GM12878 (cell line): ENCODE measurements at regions of chr3 and their contacts with region 1.

Region 1: DNA sequence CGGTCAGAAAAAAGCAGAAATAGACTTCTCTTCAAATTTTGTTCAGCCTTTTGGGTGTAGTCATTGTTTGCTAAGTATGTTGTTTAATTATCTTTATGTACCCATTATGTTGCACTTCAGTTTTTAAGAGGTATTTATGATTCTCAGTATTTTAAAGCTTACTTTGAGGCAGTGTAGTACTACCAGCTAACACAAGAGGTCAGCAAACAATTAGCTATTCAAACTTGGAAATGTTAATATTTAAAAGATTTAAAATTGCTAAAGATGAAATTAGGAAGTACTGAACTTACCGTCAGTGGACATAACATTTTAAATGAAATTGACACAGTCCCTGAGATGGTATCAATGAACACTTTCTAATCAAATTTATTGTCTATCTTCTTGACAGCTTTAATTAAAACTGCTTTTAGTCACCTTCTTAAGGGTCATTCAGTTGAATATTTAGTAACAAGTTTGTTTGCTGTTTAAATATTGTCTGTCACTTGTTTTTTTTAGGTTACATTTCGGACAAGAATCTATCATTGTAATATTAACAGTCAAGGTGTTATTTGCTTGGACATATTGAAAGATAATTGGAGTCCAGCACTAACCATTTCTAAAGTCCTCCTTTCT is 28.1 kb downstream of the NKIRAS1 start:
- DNase-seq: no peak
- ATAC-seq: peak; percentile 56
- H3K4me3 ChIP-seq: no peak overlapping the region
- H3K27ac ChIP-seq: no peak overlapping the region
- H3K4me1 ChIP-seq: no peaks in the 10 kb centered on the region
- H3K27me3 ChIP-seq: no peaks in the 10 kb centered on the region
- CTCF ChIP-seq: peak; percentile 61 to 73 (median 70)
- EP300 ChIP-seq: no peak
- POLR2A ChIP-seq: no peak
- RAD21 ChIP-seq: peak; percentile 78

Region 2: GRCh38 chr3:23877329-23877980 is 11.3 kb before region 1 on chr3:
- CTCF ChIA-PET with region 1: interaction called, 13 read pairs
- POLR2A ChIA-PET with region 1: no interaction called
- RAD21 ChIA-PET with region 1: no interaction called
- SMC1A ChIA-PET with region 1: interaction called, 5 read pairs
- in situ Hi-C with region 1: no loop called
- intact Hi-C with region 1: no loop called
- DNase-seq: no peak
- ATAC-seq: no peak
- H3K4me3 ChIP-seq: no peak overlapping the region
- H3K27ac ChIP-seq: no peak overlapping the region
- H3K4me1 ChIP-seq: no peaks in the 10 kb centered on the region
- H3K27me3 ChIP-seq: no peaks in the 10 kb centered on the region
- CTCF ChIP-seq: no peak
- EP300 ChIP-seq: no peak
- POLR2A ChIP-seq: no peak
- RAD21 ChIP-seq: no peak

Region 3: GRCh38 chr3:23945903-23946751 is 57.4 kb after region 1 on chr3:
- CTCF ChIA-PET with region 1: interaction called, 15 read pairs
- POLR2A ChIA-PET with region 1: no interaction called
- RAD21 ChIA-PET with region 1: interaction called, 6 read pairs
- SMC1A ChIA-PET with region 1: interaction called, 5 read pairs
- in situ Hi-C with region 1: no loop called
- intact Hi-C with region 1: no loop called
- DNase-seq: peak; percentile 66
- ATAC-seq: peak; percentile 81
- H3K4me3 ChIP-seq: peak overlapping the region; percentile 98
- H3K27ac ChIP-seq: peak overlapping the region; percentile 82
- H3K4me1 ChIP-seq: peaks cover 12% of the 10 kb centered on the region
- H3K27me3 ChIP-seq: peaks cover 0 to 3% of the 10 kb centered on the region in 2 experiments; a peak in 1 of 4 replicates
- CTCF ChIP-seq: no peak
- EP300 ChIP-seq: peak in 1 of 2 experiments; percentile 39; a peak in 1 of 4 replicates
- POLR2A ChIP-seq: peak; percentile 78
- RAD21 ChIP-seq: no peak

Region 4: DNA sequence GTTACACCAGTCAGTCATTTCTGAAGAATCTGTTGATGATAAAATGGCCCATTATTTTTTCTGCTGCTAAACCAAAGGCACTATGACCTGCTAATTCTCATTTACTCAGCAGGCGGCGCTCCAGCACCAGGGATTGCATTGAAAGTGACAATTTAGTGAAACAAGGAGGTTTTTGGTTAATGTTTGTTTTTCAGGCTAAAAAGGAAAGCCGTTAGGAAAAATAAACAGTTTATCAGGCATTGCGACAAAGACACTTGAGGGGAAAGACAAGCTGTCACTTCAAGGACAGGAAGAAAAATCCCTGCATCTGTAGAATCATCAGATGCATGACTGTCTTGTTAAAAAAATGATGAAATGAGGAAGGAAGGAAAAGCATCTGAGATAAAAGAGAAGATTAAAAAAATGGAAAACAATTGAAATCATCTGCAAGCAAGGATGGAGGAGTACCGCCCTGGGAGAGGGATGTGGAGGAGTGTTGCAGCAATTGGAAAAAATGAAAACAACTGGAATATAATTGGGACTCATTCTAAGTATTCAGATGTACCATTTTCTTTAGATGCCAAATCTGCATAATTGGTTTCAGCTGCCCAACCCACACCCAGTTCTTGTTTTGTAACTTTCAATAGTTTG is 110.4 kb after region 1 on chr3:
- CTCF ChIA-PET with region 1: interaction called, 15 read pairs
- POLR2A ChIA-PET with region 1: no interaction called
- RAD21 ChIA-PET with region 1: interaction called, 15 read pairs
- SMC1A ChIA-PET with region 1: interaction called, 11 read pairs
- in situ Hi-C with region 1: no loop called
- intact Hi-C with region 1: loop called (anchors 5 kb)
- DNase-seq: no peak
- ATAC-seq: peak; percentile 72
- H3K4me3 ChIP-seq: no peak overlapping the region
- H3K27ac ChIP-seq: no peak overlapping the region
- H3K4me1 ChIP-seq: no peaks in the 10 kb centered on the region
- H3K27me3 ChIP-seq: no peaks in the 10 kb centered on the region; a peak in 1 of 4 replicates
- CTCF ChIP-seq: peak; percentile 88 to 97 (median 96)
- EP300 ChIP-seq: no peak
- POLR2A ChIP-seq: no peak
- RAD21 ChIP-seq: peak; percentile 100